CD4-positive, alpha-beta memory T cell (primary cell): ENCODE measurements at regions of chr9 and their contacts with region 1.

Region 1: GRCh38 chr9:127899128-127899946 is at the start of gene ST6GALNAC6:
- DNase-seq: peak; percentile 61 to 74 (median 63)
- H3K4me3 ChIP-seq: peak within 1 kb of the TSS; percentile 68 to 79
- H3K4me3 Mint-ChIP-seq: peak within 1 kb of the TSS; percentile 87 to 92 (median 90)
- H3K27ac ChIP-seq: peak within 1 kb of the TSS; percentile 60
- H3K27ac Mint-ChIP-seq: peak within 1 kb of the TSS; percentile 47 to 91 (median 88)
- H3K4me1 ChIP-seq: peaks cover 58% of the 10 kb centered on the region
- H3K4me1 Mint-ChIP-seq: peaks cover 12 to 59% (median 37%) of the 10 kb centered on the region in 4 donors
- H3K27me3 ChIP-seq: no peaks in the 10 kb centered on the region
- H3K27me3 Mint-ChIP-seq: no peaks in the 10 kb centered on the region
- total RNA-seq, gene ST6GALNAC6: 125 to 127 TPM

Region 2: GRCh38 chr9:127293328-127293727 is 606.0 kb before region 1 on chr9:
- CTCF ChIA-PET with region 1: no interaction called
- POLR2A ChIA-PET with region 1: no interaction called
- intact Hi-C with region 1: no loop called
- DNase-seq: no peak
- H3K4me3 ChIP-seq: no peak overlapping the region
- H3K4me3 Mint-ChIP-seq: peak overlapping the region in 1 of 8 donors; percentile 36
- H3K27ac ChIP-seq: no peak overlapping the region
- H3K27ac Mint-ChIP-seq: no peak overlapping the region
- H3K4me1 ChIP-seq: no peaks in the 10 kb centered on the region
- H3K4me1 Mint-ChIP-seq: peaks cover 0 to 7% (median 0%) of the 10 kb centered on the region in 4 donors
- H3K27me3 ChIP-seq: no peaks in the 10 kb centered on the region
- H3K27me3 Mint-ChIP-seq: peaks cover 4 to 9% of the 10 kb centered on the region in 2 donors

Region 3: GRCh38 chr9:127883959-127884358 is 15.4 kb before region 1 on chr9:
- CTCF ChIA-PET with region 1: no interaction called
- POLR2A ChIA-PET with region 1: interaction called, 7 read pairs
- intact Hi-C with region 1: loop called (anchors 2 kb)
- DNase-seq: no peak
- H3K4me3 ChIP-seq: no peak overlapping the region
- H3K4me3 Mint-ChIP-seq: no peak overlapping the region
- H3K27ac ChIP-seq: no peak overlapping the region
- H3K27ac Mint-ChIP-seq: peak overlapping the region in 5 of 7 donors; percentile 19 to 72 (median 52)
- H3K4me1 ChIP-seq: no peaks in the 10 kb centered on the region
- H3K4me1 Mint-ChIP-seq: peaks cover 0 to 16% (median 9%) of the 10 kb centered on the region in 4 donors
- H3K27me3 ChIP-seq: no peaks in the 10 kb centered on the region
- H3K27me3 Mint-ChIP-seq: no peaks in the 10 kb centered on the region